Esophagus muscularis mucosa (tissue), 4 donors: ENCODE measurements at regions of chr11 and their contacts with region 1.

Region 1: GRCh38 chr11:13343931-13344717 is 66.5 kb downstream of the BMAL1 start:
- DNase-seq: no peak
- H3K4me3 ChIP-seq: no peak overlapping the region
- H3K27ac ChIP-seq: no peak overlapping the region
- H3K4me1 ChIP-seq: peaks cover 13 to 33% (median 18%) of the 10 kb centered on the region in 4 donors
- H3K27me3 ChIP-seq: no peaks in the 10 kb centered on the region
- CTCF ChIP-seq: peak; percentile 77 to 87 (median 82)
- EP300 ChIP-seq: no peak
- POLR2A ChIP-seq: no peak

Region 2: DNA sequence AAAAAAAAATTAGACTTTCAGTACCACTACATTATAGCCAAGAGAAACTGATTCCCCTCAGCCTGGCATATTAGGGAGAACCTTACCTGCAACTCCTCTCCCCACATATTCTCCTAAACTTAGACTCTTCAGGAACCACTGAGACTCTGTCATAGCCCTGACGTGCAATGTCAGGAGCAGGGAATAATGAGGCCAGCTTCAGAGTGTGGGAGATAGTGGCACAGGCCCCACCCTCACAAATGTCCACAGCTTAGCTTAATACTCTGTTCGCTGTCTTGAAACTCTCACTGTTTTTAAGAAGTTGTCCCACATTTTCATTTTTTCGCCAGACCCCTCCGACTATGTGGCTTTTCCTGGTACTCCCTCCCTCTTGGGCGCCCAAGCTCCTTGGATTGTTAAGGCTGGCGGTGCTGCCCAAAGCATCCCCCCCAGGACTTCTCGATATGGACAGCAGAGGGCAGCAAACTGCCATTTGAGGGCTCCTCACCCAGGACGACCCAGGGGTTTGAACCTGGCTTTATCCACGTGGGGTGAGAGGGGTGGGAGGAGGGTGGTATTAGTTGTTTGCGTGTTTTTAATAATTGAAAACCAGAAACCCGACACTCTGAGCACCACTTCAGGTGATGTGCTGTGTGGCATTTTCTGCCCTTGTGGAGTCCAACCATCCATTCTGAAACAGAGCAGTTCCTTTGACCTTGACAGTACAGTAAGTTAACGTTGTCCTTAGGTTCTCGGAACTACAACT is 380.2 kb before region 1 on chr11:
- intact Hi-C with region 1: loop called (anchors 5 kb)
- DNase-seq: peak; percentile 90
- H3K4me3 ChIP-seq: no peak overlapping the region
- H3K27ac ChIP-seq: no peak overlapping the region
- H3K4me1 ChIP-seq: peaks cover 0 to 5% (median 5%) of the 10 kb centered on the region in 4 donors
- H3K27me3 ChIP-seq: peaks cover 0 to 12% (median 0%) of the 10 kb centered on the region in 4 donors
- CTCF ChIP-seq: peak; percentile 77 to 95 (median 83)
- EP300 ChIP-seq: no peak
- POLR2A ChIP-seq: no peak

Region 3: GRCh38 chr11:13210424-13210823 is 133.7 kb before region 1 on chr11:
- intact Hi-C with region 1: loop called (anchors 1 kb)
- DNase-seq: no peak
- H3K4me3 ChIP-seq: no peak overlapping the region
- H3K27ac ChIP-seq: no peak overlapping the region
- H3K4me1 ChIP-seq: peaks cover 7 to 21% (median 8%) of the 10 kb centered on the region in 4 donors
- H3K27me3 ChIP-seq: no peaks in the 10 kb centered on the region
- CTCF ChIP-seq: peak; percentile 67 to 76 (median 67)
- EP300 ChIP-seq: no peak
- POLR2A ChIP-seq: no peak

Region 4: GRCh38 chr11:13276832-13277767 is 67.0 kb before region 1 on chr11:
- intact Hi-C with region 1: loop called (anchors 2 kb)
- DNase-seq: peak; percentile 100
- H3K4me3 ChIP-seq: peak overlapping the region; percentile 83 to 100 (median 94)
- H3K27ac ChIP-seq: peak overlapping the region; percentile 94 to 97 (median 96)
- H3K4me1 ChIP-seq: peaks cover 17 to 46% (median 32%) of the 10 kb centered on the region in 4 donors
- H3K27me3 ChIP-seq: no peaks in the 10 kb centered on the region
- CTCF ChIP-seq: peak in 1 of 3 experiments; percentile 33
- EP300 ChIP-seq: no peak
- POLR2A ChIP-seq: peak; percentile 57